IMR-90 (cell line): ENCODE measurements at regions of chr20 and their contacts with region 1.

Region 1: DNA sequence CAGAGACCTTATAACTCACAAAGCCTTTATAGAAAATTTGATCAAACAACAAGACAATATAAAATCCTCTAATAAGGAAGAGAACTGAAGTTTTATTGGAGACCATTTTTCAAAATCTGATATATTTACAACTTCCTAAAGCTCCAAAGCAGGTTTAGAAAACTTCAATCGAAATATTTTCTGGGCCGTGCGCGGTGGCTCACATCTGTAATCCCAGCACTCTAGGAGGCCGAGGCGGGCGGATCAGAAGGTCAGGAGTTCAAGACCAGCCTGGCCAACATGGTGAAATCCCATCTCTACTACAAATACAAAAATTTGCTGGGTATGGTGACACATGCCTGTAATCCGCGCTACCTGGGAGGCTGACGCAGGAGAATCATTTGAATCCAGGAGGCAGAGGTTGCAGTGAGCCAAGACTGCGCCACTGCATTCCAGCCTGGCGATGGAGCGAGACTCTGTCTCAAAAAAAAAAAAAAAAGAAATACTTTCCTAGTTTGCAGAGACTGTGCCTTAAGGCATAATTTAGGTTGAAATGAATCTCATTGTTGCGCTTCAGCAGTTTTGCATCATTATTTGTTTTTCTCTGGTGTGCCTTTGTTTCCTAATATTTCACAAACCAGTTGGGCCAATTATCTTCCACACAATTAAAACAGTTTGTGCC is 60.6 kb upstream of the ASIP start:
- DNase-seq: no peak
- ATAC-seq: no peak
- H3K4me3 ChIP-seq: no peak overlapping the region
- H3K27ac ChIP-seq: no peak overlapping the region
- H3K4me1 ChIP-seq: no peaks in the 10 kb centered on the region
- H3K27me3 ChIP-seq: peaks cover 26% of the 10 kb centered on the region
- CTCF ChIP-seq: no peak
- POLR2A ChIP-seq: no peak
- RAD21 ChIP-seq: no peak

Region 2: GRCh38 chr20:34215711-34216381 is 35.3 kb after region 1 on chr20:
- CTCF ChIA-PET with region 1: no interaction called
- POLR2A ChIA-PET with region 1: no interaction called
- dilution Hi-C with region 1: no loop called
- in situ Hi-C with region 1: no loop called
- intact Hi-C with region 1: loop called (anchors 1 kb)
- DNase-seq: peak; percentile 67
- ATAC-seq: peak; percentile 96
- H3K4me3 ChIP-seq: peak overlapping the region; percentile 94
- H3K27ac ChIP-seq: peak overlapping the region; percentile 95
- H3K4me1 ChIP-seq: no peaks in the 10 kb centered on the region
- H3K27me3 ChIP-seq: no peaks in the 10 kb centered on the region; the same call in 1 of the 2 replicates
- CTCF ChIP-seq: no peak
- POLR2A ChIP-seq: no peak
- RAD21 ChIP-seq: no peak